Posterior cingulate gyrus (tissue), 11 donors: ENCODE measurements at regions of chr13 and their contacts with region 1.

Region 1: DNA sequence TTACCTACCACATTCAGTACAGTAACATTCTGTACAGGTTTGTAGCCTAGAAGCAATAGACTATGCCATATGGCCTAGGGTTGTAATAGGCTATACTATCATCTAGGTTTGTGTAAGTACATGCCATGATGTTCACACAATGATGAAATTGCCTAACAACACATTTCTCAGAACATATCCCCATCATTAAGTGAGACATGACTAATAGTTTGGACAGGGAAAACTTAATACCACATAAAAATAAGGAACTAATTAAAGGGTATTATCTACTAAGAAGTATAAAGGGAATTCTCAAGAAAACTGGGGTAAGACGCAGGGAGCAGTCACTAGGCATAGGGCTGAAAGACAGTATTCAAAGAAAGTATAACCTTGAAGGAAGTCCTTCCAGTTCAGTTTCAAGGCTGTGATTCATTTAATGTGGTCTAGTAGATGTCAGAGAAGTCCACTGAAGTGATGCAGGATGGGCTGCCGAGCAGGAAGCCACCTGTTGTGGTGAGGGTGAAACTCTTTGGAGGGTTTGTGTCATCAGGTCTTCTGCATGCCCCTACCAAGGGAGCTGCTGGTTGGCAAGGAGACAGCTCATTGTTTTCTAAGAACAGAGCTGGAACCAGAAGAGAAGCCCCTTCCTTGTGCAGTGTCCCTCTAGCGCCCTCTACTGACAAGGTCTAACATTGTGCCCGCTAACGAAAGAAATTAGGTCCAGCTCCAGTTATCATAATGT is 122.9 kb downstream of the OLFM4 start:
- DNase-seq: peak in 4 of 10 donors; percentile 16 to 54 (median 48)

Region 2: GRCh38 chr13:52968074-52968700 is 183.3 kb before region 1 on chr13:
- intact Hi-C with region 1: loop called (anchors 10 kb)
- DNase-seq: peak; percentile 33 to 95 (median 74)

Region 3: DNA sequence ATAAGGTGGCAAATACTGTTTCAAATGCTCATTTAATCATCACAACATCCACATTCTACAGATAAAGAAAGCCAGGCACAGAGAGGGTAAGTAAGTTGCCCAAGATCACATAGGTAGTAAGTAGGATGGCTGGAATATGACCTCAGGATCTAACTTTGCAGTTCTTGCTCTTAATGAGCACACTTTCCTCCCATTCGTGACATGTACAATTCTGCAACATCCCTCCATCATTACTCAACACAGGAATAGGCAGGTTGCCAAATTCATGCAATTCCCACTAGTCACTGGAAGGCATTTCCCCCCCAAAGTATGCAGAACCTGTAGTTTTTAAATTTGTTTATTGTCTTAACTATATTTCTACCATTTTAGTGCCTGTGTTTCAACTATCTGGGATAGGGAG is 13.7 kb before region 1 on chr13:
- intact Hi-C with region 1: no loop called
- DNase-seq: no peak

Region 4: DNA sequence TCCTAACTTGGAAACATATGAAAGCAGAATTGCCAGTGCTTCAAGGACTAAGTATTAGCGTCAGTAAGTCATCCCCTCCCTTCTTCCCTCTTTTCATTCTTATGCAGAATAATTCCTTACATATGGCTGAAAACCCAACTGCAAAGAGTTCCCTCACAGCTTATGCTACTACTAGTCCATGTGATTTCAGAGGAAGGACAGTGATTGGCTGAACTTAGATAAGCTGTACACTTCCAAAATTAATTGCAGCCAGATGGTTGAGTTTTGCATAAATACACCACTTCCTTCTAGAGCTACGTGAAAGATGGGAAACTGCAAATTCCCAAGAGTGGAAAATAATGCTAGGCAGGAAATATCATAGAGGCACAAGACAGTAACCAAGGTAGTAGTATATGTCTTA is 607.5 kb after region 1 on chr13:
- intact Hi-C with region 1: no loop called
- DNase-seq: no peak